ENCODE measurements at regions of chr12 and their contacts with region 1.

Region 1: GRCh38 chr12:45728630-45729232 is 775 bp upstream of the ARID2 start:
- DNase-seq: peak; percentile 83
- CTCF ChIP-seq: peak; percentile 98

Region 2: DNA sequence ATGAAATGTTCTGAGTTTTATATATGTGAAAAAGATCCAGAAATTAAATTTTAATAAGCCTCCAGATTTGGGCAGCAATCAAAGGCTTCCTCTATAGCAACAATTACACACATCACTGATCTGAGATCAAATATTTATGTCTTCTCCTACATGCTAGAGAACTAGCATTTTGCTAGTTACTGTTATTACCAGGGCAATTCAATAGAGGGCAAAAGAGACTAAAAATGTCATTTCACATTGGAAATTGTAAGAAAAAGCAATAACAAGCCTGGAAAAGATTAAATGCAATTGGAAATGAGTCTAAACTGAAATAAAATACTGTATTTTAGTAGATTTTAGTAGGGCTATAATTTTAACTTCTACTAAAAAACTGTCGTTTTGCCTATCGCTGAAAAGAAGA is 545.5 kb before region 1 on chr12:
- in situ Hi-C with region 1: loop called (anchors 25 kb)
- DNase-seq: no peak
- CTCF ChIP-seq: peak; percentile 32

Region 3: GRCh38 chr12:45828402-45828801 is 99.7 kb after region 1 on chr12:
- in situ Hi-C with region 1: no loop called
- DNase-seq: no peak
- CTCF ChIP-seq: no peak

Region 4: GRCh38 chr12:45959728-45960127 is 231.0 kb after region 1 on chr12:
- in situ Hi-C with region 1: no loop called
- DNase-seq: no peak
- CTCF ChIP-seq: no peak

Region 5: GRCh38 chr12:46064548-46064947 is 335.8 kb after region 1 on chr12:
- in situ Hi-C with region 1: no loop called
- DNase-seq: no peak
- CTCF ChIP-seq: no peak

Region 6: GRCh38 chr12:46983393-46984266 is 1254.9 kb after region 1 on chr12:
- in situ Hi-C with region 1: no loop called
- DNase-seq: peak; percentile 28
- CTCF ChIP-seq: peak; percentile 73

Measured in GM13977 (cell line).